ENCODE measurements at regions of chr12 and their contacts with region 1.

Region 1: GRCh38 chr12:84397263-84397662 is 515.3 kb downstream of the SLC6A15 start:
- DNase-seq: no peak
- H3K4me3 ChIP-seq: no peak overlapping the region
- H3K27ac ChIP-seq: no peak overlapping the region
- H3K27me3 ChIP-seq: no peaks in the 10 kb centered on the region
- CTCF ChIP-seq: peak in 55 of 56 donors; percentile 18 to 70 (median 45)

Region 2: GRCh38 chr12:83826112-83826511 is 571.2 kb before region 1 on chr12:
- intact Hi-C with region 1: loop called in 1 of 2 experiments (anchors 5 kb)
- DNase-seq: peak in 4 of 10 donors; percentile 24 to 45 (median 38)
- H3K4me3 ChIP-seq: no peak overlapping the region
- H3K27ac ChIP-seq: no peak overlapping the region
- H3K27me3 ChIP-seq: no peaks in the 10 kb centered on the region
- CTCF ChIP-seq: peak in 53 of 56 donors; percentile 24 to 70 (median 51)

Region 3: GRCh38 chr12:84085046-84085445 is 312.2 kb before region 1 on chr12:
- intact Hi-C with region 1: no loop called
- DNase-seq: no peak
- H3K4me3 ChIP-seq: no peak overlapping the region
- H3K27ac ChIP-seq: no peak overlapping the region
- H3K27me3 ChIP-seq: no peaks in the 10 kb centered on the region
- CTCF ChIP-seq: no peak

Measured in dorsolateral prefrontal cortex (tissue), 120 donors.